HAP-1 (cell line): ENCODE measurements at regions of chr15 and their contacts with region 1.

Region 1: GRCh38 chr15:57561041-57561711 is 30.5 kb upstream of the MYZAP start:
- DNase-seq: peak; percentile 72 to 84
- H3K4me3 ChIP-seq: no peak overlapping the region
- H3K4me1 ChIP-seq: no peaks in the 10 kb centered on the region; the same call in none of the 2 replicates
- H3K27me3 ChIP-seq: no peaks in the 10 kb centered on the region; the same call in 1 of the 2 replicates

Region 2: DNA sequence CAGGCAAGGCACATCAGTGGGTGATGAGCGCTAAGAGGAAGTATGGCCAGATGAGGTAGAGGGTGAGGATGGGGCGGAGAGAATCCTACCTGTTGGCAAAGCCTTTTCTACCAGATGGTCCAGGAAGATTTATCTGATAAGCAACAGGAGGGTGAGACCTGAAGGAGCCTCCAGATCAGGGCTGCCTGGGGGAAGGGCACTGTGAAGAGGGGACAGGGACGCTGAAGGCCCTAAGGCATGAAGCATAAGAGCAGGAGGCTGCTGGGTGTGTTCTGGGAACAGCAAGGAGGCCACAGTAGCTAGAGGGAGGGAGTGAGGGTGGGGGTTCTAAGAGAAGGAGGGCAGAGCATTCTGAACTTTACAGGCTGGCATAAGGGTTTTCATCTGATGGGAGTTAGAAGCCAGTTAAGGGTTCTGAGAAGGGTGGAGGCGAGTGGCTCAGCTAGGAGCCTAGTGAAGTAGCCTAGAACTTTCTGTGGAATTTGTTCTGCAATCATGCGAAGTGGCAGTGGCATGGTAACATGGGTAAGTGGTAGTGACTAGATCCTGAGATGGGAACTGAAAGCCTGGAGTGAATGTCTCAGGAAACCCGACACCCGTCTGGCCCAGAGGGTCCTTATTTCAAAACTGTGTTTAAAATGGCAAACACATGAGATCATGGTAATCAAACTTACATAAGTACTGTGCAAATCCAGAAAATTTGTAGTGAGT is 155.0 kb before region 1 on chr15:
- in situ Hi-C with region 1: no loop called
- DNase-seq: no peak
- H3K4me3 ChIP-seq: no peak overlapping the region
- H3K4me1 ChIP-seq: no peaks in the 10 kb centered on the region
- H3K27me3 ChIP-seq: no peaks in the 10 kb centered on the region

Region 3: GRCh38 chr15:57732526-57733331 is 171.6 kb after region 1 on chr15:
- in situ Hi-C with region 1: loop called (anchors 10 kb)
- DNase-seq: peak; percentile 31 to 79
- H3K4me3 ChIP-seq: no peak overlapping the region
- H3K4me1 ChIP-seq: no peaks in the 10 kb centered on the region
- H3K27me3 ChIP-seq: no peaks in the 10 kb centered on the region

Region 4: GRCh38 chr15:57861036-57861638 is 300.0 kb after region 1 on chr15:
- in situ Hi-C with region 1: loop called (anchors 5 kb)
- DNase-seq: peak; percentile 38 to 49
- H3K4me3 ChIP-seq: no peak overlapping the region
- H3K4me1 ChIP-seq: no peaks in the 10 kb centered on the region
- H3K27me3 ChIP-seq: peaks cover 15% of the 10 kb centered on the region

Region 5: GRCh38 chr15:58070801-58071418 is 509.7 kb after region 1 on chr15:
- in situ Hi-C with region 1: loop called (anchors 10 kb)
- DNase-seq: peak; percentile 57 to 76
- H3K4me3 ChIP-seq: no peak overlapping the region
- H3K4me1 ChIP-seq: no peaks in the 10 kb centered on the region
- H3K27me3 ChIP-seq: peaks cover 28% of the 10 kb centered on the region

Region 6: DNA sequence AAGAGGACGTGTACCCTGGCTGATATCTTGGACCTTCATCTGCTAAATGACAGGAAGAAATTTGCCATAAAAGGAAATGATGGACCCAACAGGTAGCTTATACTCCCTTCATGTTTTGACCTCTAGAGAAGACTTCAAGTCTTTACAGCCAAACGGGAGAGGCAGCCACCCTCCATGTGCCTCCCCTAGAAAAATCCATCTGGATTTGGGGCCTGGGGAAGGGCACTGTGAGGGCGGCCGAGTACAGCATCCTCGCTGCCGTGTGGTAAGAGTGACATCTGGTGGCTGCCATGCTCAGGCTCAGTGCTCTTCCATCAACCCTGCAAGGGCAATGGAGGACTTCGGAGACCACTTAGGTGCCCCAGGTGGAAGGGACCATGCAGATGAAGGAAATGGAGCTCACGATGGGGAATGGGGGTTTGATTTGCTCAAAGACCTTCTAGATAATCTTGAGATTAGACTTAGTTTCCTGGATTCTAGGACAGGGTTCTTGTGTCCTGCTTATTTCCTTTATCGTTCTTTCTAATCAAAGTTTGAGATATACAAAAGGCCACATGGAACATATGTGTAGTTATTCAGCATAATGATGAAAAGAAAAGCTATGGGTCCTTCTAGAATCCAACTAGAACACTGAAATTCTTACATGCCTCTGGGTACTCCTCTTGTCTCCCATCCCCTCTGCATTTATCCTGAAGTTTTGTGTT is 621.4 kb after region 1 on chr15:
- in situ Hi-C with region 1: loop called (anchors 10 kb)
- DNase-seq: peak; percentile 29 to 63
- H3K4me3 ChIP-seq: no peak overlapping the region
- H3K4me1 ChIP-seq: no peaks in the 10 kb centered on the region
- H3K27me3 ChIP-seq: peaks cover 15% of the 10 kb centered on the region